ENCODE measurements at regions of chr9 and their contacts with region 1.

Region 1: DNA sequence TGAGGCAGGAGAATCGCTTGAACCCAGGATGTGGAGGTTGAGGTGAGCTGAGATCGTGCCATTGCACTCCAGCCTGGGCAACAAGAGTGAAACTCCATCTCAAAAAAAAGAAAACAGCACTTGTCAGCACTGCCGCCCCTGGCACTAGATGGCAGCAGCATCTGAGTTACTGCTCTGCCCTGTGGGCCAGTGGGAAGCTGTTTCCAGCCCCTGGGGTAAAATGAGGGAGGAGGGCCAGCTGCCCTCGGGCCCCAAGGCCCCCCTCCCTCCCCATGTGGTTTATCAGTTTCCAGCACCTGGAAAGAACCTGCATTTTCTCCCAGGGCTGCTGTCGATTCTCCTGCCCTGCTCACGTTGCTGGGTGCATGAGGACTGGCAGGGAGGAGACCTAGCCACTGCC is 13.2 kb upstream of the CEL start:
- DNase-seq: no peak
- H3K4me3 ChIP-seq: no peak overlapping the region
- CTCF ChIP-seq: peak; percentile 55

Region 2: GRCh38 chr9:133030317-133031129 is 18.0 kb before region 1 on chr9 and contains the start of gene GTF3C5:
- CTCF ChIA-PET with region 1: interaction called, 148 read pairs
- POLR2A ChIA-PET with region 1: no interaction called
- DNase-seq: peak; percentile 96
- H3K4me3 ChIP-seq: peak within 1 kb of the TSS; percentile 92
- CTCF ChIP-seq: no peak